ENCODE measurements at regions of chr15 and their contacts with region 1.

Region 1: GRCh38 chr15:23039151-23039916 is at the start of gene TUBGCP5:
- DNase-seq: peak; percentile 99
- H3K4me3 Mint-ChIP-seq: peak within 1 kb of the TSS; percentile 85
- H3K27ac Mint-ChIP-seq: peak within 1 kb of the TSS; percentile 80
- H3K4me1 Mint-ChIP-seq: peaks cover 23% of the 10 kb centered on the region
- H3K27me3 Mint-ChIP-seq: no peaks in the 10 kb centered on the region
- total RNA-seq, gene TUBGCP5: 11.6 to 12.3 TPM

Region 2: DNA sequence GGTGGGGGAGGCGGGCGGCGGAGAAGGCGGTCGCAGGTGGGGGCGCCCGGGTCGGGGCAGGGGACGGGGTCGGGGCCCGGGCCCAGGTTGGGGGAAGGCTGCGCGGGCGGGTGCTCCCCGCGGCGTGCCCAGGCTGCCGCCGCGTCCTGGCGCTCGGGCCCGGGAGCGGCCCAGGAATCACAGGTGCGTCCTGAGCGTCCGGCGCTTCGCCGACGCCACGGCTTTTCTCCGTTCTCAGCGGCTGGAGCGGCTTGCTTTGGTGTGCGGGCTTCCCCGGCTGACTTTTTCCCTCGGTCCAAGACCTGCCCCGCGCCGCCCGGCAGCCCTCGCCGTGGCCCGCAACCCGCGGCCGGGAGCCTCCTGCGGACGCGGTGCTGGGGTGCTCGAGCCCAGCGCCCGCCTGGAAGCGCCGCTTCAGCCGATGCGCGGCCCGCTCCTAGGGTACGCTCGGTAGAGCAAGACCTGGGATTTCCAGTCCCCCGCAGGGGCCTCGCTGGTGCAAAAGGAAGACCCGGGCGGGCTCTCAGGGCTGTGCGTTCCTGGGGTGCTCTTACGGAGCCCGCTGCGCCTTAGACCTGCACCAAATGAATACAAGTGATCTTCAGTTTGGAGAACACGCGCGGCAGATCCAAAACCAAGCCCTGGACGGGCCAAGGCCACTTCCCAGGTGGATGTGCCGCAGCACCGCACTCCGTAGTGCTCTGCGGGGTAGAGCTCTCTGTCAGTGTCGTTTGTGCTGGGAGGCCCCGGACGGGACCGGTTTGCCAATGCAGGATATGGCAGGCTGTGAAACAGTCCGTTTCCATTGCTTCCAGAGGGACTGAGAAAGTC is 252.3 kb before region 1 on chr15:
- CTCF ChIA-PET with region 1: no interaction called
- intact Hi-C with region 1: loop called (anchors 5 kb)
- DNase-seq: peak; percentile 15
- H3K4me3 Mint-ChIP-seq: peak overlapping the region; percentile 71
- H3K27ac Mint-ChIP-seq: no peak overlapping the region
- H3K4me1 Mint-ChIP-seq: peaks cover 9% of the 10 kb centered on the region
- H3K27me3 Mint-ChIP-seq: no peaks in the 10 kb centered on the region

Region 3: DNA sequence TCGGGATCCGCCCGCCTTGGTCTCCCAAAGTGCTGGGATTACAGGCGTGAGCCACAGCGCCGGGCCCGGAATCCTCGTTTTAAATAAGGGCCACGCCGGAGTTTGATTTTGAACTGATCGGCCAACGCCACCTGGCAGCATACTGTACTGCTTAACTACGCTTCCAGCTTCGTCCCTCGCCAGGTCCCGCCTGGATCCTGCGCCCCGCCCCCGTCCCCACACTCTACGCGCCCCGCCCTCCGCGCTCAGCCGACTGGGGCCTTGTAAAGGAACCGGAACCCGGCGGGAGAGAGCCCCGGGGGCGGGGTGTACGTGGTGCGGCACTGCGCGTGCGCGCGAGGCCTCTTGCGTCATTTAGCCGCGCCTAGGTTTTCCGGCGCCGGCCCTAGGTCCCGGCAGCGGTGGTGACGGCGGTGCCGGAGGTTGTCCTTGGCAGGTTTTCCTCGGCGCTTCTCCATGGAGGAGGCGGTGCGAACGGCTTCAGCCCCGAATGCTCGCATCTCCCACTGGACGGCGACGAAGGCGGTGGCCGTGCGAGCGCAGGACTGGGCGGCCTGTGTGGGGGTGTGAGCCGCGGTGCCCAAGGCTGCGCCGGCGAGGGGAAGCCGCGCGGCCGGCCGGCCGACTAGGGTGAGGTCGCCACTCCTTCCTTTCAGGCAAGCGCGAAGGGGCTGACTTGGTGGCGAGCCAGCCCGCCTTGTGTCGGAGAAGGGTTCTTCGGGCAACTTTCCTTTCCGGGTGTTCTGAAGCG is 200.9 kb before region 1 on chr15 and contains the start of gene NIPA2:
- CTCF ChIA-PET with region 1: interaction called, 5 read pairs
- intact Hi-C with region 1: loop called (anchors 1 kb)
- DNase-seq: peak; percentile 97
- H3K4me3 Mint-ChIP-seq: peak within 1 kb of the TSS; percentile 95
- H3K27ac Mint-ChIP-seq: peak within 1 kb of the TSS; percentile 90
- H3K4me1 Mint-ChIP-seq: peaks cover 24% of the 10 kb centered on the region
- H3K27me3 Mint-ChIP-seq: no peaks in the 10 kb centered on the region
- total RNA-seq, gene NIPA2: 47.0 to 47.9 TPM

Region 4: GRCh38 chr15:22980189-22981050 is 58.9 kb before region 1 on chr15 and contains the start of gene CYFIP1:
- CTCF ChIA-PET with region 1: interaction called, 3 read pairs
- intact Hi-C with region 1: loop called (anchors 2 kb)
- DNase-seq: peak; percentile 52
- H3K4me3 Mint-ChIP-seq: peak within 1 kb of the TSS; percentile 91
- H3K27ac Mint-ChIP-seq: no peak within 1 kb of the TSS
- H3K4me1 Mint-ChIP-seq: peaks cover 6% of the 10 kb centered on the region
- H3K27me3 Mint-ChIP-seq: peaks cover 20% of the 10 kb centered on the region
- total RNA-seq, gene CYFIP1: 34.0 to 35.1 TPM

Region 5: DNA sequence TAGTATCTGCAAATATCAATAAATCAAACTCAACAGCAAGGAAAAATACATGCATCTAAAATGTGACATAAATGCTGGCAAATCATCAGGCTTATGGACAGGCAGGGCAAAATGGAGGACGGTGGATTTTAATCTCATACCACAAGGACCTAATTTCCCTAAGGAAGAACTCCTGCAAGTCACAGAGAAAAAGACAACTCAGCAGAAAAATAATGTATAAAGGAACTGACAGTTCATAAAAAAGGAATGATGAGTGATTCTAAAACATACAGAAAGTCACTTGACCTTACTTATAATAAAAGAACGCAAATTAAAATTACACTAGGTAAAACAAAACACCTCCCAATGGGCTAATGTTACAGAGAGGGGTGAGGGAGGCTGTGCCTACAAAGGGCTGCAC is 17.2 kb before region 1 on chr15:
- CTCF ChIA-PET with region 1: interaction called, 13 read pairs
- intact Hi-C with region 1: no loop called
- DNase-seq: no peak
- H3K4me3 Mint-ChIP-seq: no peak overlapping the region
- H3K27ac Mint-ChIP-seq: no peak overlapping the region
- H3K4me1 Mint-ChIP-seq: no peaks in the 10 kb centered on the region
- H3K27me3 Mint-ChIP-seq: no peaks in the 10 kb centered on the region

Region 6: GRCh38 chr15:23095796-23096195 is 56.5 kb after region 1 on chr15:
- CTCF ChIA-PET with region 1: no interaction called
- intact Hi-C with region 1: no loop called
- DNase-seq: no peak
- H3K4me3 Mint-ChIP-seq: no peak overlapping the region
- H3K27ac Mint-ChIP-seq: no peak overlapping the region
- H3K4me1 Mint-ChIP-seq: no peaks in the 10 kb centered on the region
- H3K27me3 Mint-ChIP-seq: peaks cover 8% of the 10 kb centered on the region

Region 7: GRCh38 chr15:23467110-23467600 is 427.8 kb after region 1 on chr15:
- CTCF ChIA-PET with region 1: interaction called, 3 read pairs
- intact Hi-C with region 1: loop called (anchors 5 kb)
- DNase-seq: no peak
- H3K4me3 Mint-ChIP-seq: no peak overlapping the region
- H3K27ac Mint-ChIP-seq: no peak overlapping the region
- H3K4me1 Mint-ChIP-seq: no peaks in the 10 kb centered on the region
- H3K27me3 Mint-ChIP-seq: peaks cover 16% of the 10 kb centered on the region

Region 8: GRCh38 chr15:23565395-23566070 is 526.2 kb after region 1 on chr15 and contains the start of gene MKRN3:
- CTCF ChIA-PET with region 1: no interaction called
- intact Hi-C with region 1: loop called (anchors 5 kb)
- DNase-seq: peak; percentile 67
- H3K4me3 Mint-ChIP-seq: peak within 1 kb of the TSS; percentile 79
- H3K27ac Mint-ChIP-seq: peak within 1 kb of the TSS; percentile 92
- H3K4me1 Mint-ChIP-seq: peaks cover 6% of the 10 kb centered on the region
- H3K27me3 Mint-ChIP-seq: peaks cover 13% of the 10 kb centered on the region
- total RNA-seq, gene MKRN3: 2.5 to 3.2 TPM

Region 9: DNA sequence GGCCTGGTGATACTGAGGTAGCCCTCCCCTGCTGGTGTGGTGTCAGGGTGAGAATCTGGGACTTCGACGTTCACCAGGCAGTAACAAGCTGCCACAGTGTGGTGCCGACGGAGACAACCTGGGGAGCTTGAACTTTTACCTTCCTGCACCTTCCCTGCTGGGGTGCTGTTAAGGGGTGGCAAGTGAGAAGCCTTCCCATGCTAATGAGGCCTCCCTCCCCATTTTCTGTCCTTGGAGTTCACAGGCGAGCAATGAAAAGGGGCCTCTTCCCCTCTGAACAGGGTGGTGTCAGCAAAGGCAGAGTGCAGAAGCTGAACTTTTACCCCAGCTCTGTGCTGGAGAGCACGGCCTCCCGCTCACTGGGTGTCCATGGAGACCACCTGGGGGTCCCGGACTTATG is 594.8 kb after region 1 on chr15:
- CTCF ChIA-PET with region 1: no interaction called
- intact Hi-C with region 1: no loop called
- DNase-seq: no peak
- H3K4me3 Mint-ChIP-seq: no peak overlapping the region
- H3K27ac Mint-ChIP-seq: no peak overlapping the region
- H3K4me1 Mint-ChIP-seq: no peaks in the 10 kb centered on the region
- H3K27me3 Mint-ChIP-seq: peaks cover 7% of the 10 kb centered on the region

Measured in activated naive CD4-positive, alpha-beta T cell treated with anti-CD3 and anti-CD28 coated beads for 36 hours (primary cell).